ENCODE measurements at regions of chr2 and their contacts with region 1.

Region 1: DNA sequence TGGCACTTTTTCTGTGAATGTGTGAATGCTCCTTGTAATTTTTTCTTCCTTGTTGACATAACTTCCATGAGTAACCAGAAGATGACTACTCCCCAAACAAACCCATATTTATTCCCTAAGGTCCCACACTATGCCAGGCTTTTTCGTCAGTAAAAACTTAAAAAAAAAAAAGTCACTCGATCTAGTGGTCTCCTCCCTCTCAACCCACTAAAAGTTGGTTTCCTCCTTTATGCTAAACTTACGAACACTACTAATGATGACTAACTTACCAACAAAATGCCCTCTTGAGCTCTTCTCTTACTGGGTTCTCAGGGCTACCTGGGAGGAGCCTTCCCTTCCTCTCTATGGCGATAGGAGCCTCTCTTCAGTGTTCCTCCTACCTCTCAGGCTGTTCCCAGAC is 18.2 kb downstream of the ACVR1 start:
- DNase-seq: peak; percentile 91
- ATAC-seq: peak; percentile 84
- H3K4me3 ChIP-seq: no peak overlapping the region
- H3K27ac ChIP-seq: peak overlapping the region; percentile 97
- H3K4me1 ChIP-seq: peaks cover 42% of the 10 kb centered on the region
- H3K27me3 ChIP-seq: no peaks in the 10 kb centered on the region
- CTCF ChIP-seq: no peak

Region 2: DNA sequence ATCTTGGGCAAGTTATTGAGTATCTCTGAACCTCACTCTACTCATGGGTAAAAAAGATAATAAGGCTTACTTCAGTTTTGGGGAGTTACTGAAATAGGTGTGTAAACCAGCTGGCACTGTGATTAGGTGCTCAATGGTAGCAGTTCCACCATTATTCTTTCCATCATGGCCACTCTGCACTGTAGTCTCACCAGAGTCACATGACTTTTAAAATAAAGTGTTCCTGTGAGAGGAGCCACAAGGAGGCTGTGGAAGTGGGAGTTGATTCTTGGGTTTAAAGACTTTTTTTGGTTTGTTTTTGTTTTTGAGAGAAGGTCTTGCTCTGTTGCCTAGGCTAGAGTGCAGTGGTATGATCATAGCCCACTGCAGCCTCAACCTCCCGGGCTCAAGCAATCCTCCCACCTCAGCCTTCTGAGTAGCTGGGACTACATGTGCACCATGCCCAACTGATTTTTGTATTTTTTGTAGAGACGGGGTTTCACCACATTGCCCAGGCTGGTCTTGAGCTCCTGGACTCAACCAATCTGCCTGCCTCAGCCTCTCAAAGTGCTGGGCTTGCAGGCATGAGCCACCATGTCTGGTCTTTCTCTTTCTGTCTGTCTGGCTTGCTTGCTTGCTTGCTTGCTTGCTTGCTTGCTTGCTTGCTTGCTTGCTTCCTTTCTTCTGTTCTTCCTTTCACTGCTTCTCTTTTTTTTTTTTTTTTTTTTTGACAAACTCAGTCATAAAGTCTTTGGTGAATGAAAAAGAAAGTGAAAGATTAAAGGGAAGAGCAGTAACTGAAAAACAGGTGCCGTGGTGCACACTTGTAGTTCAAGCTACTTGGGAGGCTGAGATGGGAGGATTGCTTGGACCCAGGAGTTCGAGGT is 39.5 kb after region 1 on chr2:
- CTCF ChIA-PET with region 1: no interaction called
- POLR2A ChIA-PET with region 1: no interaction called
- intact Hi-C with region 1: no loop called
- DNase-seq: no peak
- ATAC-seq: no peak
- H3K4me3 ChIP-seq: no peak overlapping the region
- H3K27ac ChIP-seq: no peak overlapping the region
- H3K4me1 ChIP-seq: peaks cover 24% of the 10 kb centered on the region
- H3K27me3 ChIP-seq: no peaks in the 10 kb centered on the region
- CTCF ChIP-seq: no peak

Region 3: GRCh38 chr2:158432117-158432516 is 574.2 kb after region 1 on chr2:
- CTCF ChIA-PET with region 1: no interaction called
- POLR2A ChIA-PET with region 1: interaction called, 23 read pairs
- intact Hi-C with region 1: no loop called
- DNase-seq: no peak
- ATAC-seq: no peak
- H3K4me3 ChIP-seq: no peak overlapping the region
- H3K27ac ChIP-seq: no peak overlapping the region
- H3K4me1 ChIP-seq: no peaks in the 10 kb centered on the region
- H3K27me3 ChIP-seq: no peaks in the 10 kb centered on the region
- CTCF ChIP-seq: no peak

Measured in PC-3 (cell line).